ENCODE measurements at regions of chr17 and their contacts with region 1.

Region 1: GRCh38 chr17:35119368-35120165 is at the start of gene RAD51D:
- DNase-seq: peak; percentile 45 to 85 (median 64)
- H3K4me3 ChIP-seq: peak within 1 kb of the TSS; percentile 64 to 99 (median 90)
- H3K27ac ChIP-seq: peak within 1 kb of the TSS in 54 of 59 donors; percentile 2 to 93 (median 74)
- H3K27me3 ChIP-seq: no peaks in the 10 kb centered on the region
- CTCF ChIP-seq: peak; percentile 61 to 100 (median 88)
- total RNA-seq, gene RAD51D: 13.1 to 37.9 (median 23.4) TPM

Region 2: GRCh38 chr17:34199932-34200534 is 919.5 kb before region 1 on chr17:
- intact Hi-C with region 1: loop called in 1 of 2 experiments (anchors 10 kb)
- DNase-seq: peak in 7 of 10 donors; percentile 36 to 71 (median 56)
- H3K4me3 ChIP-seq: no peak overlapping the region
- H3K27ac ChIP-seq: no peak overlapping the region
- H3K27me3 ChIP-seq: peaks cover 0 to 20% (median 0%) of the 10 kb centered on the region in 45 donors
- CTCF ChIP-seq: peak; percentile 85 to 100 (median 99)

Region 3: GRCh38 chr17:34420254-34420766 is 699.3 kb before region 1 on chr17:
- intact Hi-C with region 1: loop called (anchors 2 to 10 kb)
- DNase-seq: peak in 9 of 10 donors; percentile 41 to 76 (median 65)
- H3K4me3 ChIP-seq: no peak overlapping the region
- H3K27ac ChIP-seq: no peak overlapping the region
- H3K27me3 ChIP-seq: peaks cover 0 to 52% (median 17%) of the 10 kb centered on the region in 45 donors
- CTCF ChIP-seq: peak; percentile 86 to 99 (median 95)

Region 4: GRCh38 chr17:34542700-34543336 is 576.7 kb before region 1 on chr17:
- intact Hi-C with region 1: loop called (anchors 2 kb)
- DNase-seq: peak in 6 of 10 donors; percentile 28 to 58 (median 49)
- H3K4me3 ChIP-seq: no peak overlapping the region
- H3K27ac ChIP-seq: no peak overlapping the region
- H3K27me3 ChIP-seq: peaks cover 0 to 10% (median 0%) of the 10 kb centered on the region in 45 donors
- CTCF ChIP-seq: peak; percentile 78 to 98 (median 92)

Region 5: DNA sequence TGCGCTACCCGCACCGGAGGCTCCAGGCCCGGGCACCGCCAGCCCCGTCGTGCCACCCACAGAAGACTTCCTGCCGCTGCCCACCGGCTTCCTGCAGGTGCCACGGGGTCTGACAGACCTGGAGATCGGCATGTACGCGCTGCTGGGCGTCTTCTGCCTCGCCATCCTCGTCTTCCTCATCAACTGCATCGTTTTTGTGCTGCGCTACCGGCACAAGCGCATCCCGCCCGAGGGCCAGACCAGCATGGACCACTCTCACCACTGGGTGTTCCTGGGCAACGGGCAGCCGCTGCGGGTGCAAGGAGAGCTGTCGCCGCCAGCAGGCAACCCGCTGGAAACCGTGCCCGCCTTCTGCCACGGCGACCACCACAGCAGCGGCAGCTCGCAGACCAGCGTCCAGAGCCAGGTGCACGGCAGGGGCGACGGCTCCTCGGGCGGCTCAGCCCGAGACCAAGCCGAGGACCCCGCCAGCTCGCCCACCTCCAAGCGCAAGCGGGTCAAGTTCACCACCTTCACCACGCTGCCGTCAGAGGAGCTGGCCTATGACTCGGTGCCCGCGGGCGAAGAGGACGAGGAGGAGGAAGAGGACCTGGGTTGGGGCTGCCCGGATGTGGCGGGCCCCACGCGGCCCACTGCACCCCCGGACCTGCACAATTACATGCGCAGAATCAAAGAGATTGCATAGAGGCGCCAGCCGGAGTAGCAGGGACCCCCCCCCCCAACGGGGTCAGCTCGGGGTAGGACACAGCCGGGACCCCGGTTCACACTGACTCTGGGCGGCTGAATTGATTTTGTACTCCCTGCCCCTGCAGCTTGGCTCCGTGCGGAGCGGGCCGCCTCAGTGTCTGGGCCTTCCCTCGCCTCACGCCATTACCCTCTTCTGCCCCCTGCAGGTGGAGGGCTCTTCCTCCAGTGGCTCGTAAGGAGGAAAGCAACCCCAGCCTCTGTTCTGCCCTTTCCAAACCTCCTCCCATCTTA is 481.7 kb before region 1 on chr17:
- intact Hi-C with region 1: loop called in 1 of 2 experiments (anchors 2 kb)
- DNase-seq: peak; percentile 51 to 82 (median 66)
- H3K4me3 ChIP-seq: peak overlapping the region; percentile 17 to 67 (median 43)
- H3K27ac ChIP-seq: peak overlapping the region in 5 of 59 donors; percentile 9 to 74 (median 21)
- H3K27me3 ChIP-seq: peaks cover 0 to 5% (median 0%) of the 10 kb centered on the region in 45 donors
- CTCF ChIP-seq: peak; percentile 48 to 96 (median 87)

Region 6: GRCh38 chr17:34980681-34981537 is 138.7 kb before region 1 on chr17:
- intact Hi-C with region 1: loop called in 1 of 2 experiments (anchors 5 kb)
- DNase-seq: peak in 9 of 10 donors; percentile 41 to 73 (median 61)
- H3K4me3 ChIP-seq: peak overlapping the region; percentile 55 to 100 (median 95)
- H3K27ac ChIP-seq: peak overlapping the region; percentile 77 to 99 (median 94)
- H3K27me3 ChIP-seq: no peaks in the 10 kb centered on the region
- CTCF ChIP-seq: peak in 33 of 56 donors; percentile 13 to 54 (median 33)

Region 7: DNA sequence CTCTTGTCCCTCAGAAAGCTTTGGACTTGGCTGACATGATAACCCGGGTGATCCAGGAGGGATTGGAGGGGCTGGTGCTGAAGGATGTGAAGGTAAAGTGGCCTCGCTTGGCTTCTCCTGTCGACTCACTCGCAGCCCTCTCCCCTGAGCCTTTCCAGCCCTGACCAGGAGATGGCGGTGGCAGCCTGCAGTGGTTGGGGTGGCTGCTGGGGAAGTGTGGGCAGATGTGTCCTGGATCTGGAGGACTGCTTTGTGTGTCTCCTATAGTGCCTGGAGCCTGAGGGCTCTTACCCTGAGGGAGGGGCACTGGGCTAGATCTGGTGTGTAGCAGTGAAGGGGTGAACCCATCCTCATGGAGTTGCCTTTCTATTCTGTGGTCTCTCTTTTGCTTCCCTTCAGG is 121.4 kb before region 1 on chr17:
- intact Hi-C with region 1: loop called (anchors 1 to 5 kb)
- DNase-seq: peak in 9 of 10 donors; percentile 69 to 85 (median 75)
- H3K4me3 ChIP-seq: peak overlapping the region in 1 of 59 donors; percentile 2
- H3K27ac ChIP-seq: peak overlapping the region in 58 of 59 donors; percentile 0 to 100 (median 79)
- H3K27me3 ChIP-seq: no peaks in the 10 kb centered on the region
- CTCF ChIP-seq: peak in 55 of 56 donors; percentile 44 to 93 (median 80)